GM12878 (cell line): ENCODE measurements at regions of chr12 and their contacts with region 1.

Region 1: DNA sequence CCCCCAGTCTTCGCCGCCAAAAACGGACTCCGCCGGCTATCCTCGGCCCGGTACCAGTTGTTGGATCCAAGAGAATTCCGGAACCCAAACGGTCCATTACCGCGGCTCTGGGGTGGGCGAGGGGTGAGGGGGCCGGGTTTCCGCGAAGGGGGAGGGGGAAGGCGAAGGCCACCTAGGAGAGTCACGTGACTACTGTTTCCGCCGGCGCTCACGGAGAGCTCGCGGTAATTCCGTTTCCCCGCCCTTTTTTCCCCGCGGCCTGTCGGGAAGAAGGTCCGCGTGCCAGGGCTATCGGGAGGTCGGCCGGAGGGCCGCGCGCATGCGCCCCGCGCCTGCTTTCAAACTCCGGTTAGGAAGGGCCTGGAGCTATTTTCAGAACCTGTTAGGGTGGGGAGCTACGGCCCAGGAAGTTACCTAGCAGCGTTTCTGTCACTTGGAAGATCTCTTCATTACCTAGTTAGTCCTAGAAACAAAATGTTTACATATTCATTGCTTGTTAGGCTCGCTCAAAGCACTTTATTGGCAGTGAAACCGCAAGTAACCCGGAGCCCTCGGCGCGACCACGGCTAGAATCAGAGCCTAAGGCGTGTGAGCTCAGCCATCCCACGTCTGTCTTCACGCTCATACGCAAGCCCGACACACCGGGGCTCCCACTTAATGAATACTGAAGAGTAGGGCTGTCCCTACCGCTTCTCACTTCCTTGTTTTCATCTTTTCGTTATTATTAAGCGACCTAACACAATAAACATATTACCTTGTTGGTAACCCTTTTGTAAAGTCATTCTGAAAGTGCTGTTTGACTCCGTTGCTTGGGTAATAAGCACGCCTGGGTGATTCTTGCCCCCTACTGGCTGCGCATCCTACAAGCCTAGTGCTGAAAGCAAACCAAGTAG is 624 bp upstream of the SBNO1 start:
- DNase-seq: peak; percentile 98
- ATAC-seq: peak; percentile 82
- H3K4me3 ChIP-seq: peak overlapping the region; percentile 61; the same call in 1 of the 2 replicates
- H3K27ac ChIP-seq: peak overlapping the region; percentile 99
- H3K4me1 ChIP-seq: peaks cover 10% of the 10 kb centered on the region
- H3K27me3 ChIP-seq: no peaks in the 10 kb centered on the region
- CTCF ChIP-seq: peak; percentile 76 to 89 (median 82)
- EP300 ChIP-seq: peak; percentile 99
- POLR2A ChIP-seq: peak; percentile 87
- RAD21 ChIP-seq: peak; percentile 66

Region 2: GRCh38 chr12:121663610-121663929 is 1701.7 kb before region 1 on chr12:
- CTCF ChIA-PET with region 1: no interaction called
- POLR2A ChIA-PET with region 1: no interaction called
- RAD21 ChIA-PET with region 1: no interaction called
- SMC1A ChIA-PET with region 1: no interaction called
- in situ Hi-C with region 1: no loop called
- intact Hi-C with region 1: loop called (anchors 5 kb)
- DNase-seq: no peak
- ATAC-seq: no peak
- H3K4me3 ChIP-seq: no peak overlapping the region
- H3K27ac ChIP-seq: peak overlapping the region; percentile 99
- H3K4me1 ChIP-seq: peaks cover 20% of the 10 kb centered on the region
- H3K27me3 ChIP-seq: no peaks in the 10 kb centered on the region
- CTCF ChIP-seq: no peak
- EP300 ChIP-seq: no peak
- POLR2A ChIP-seq: no peak
- RAD21 ChIP-seq: no peak

Region 3: GRCh38 chr12:123286652-123287373 is 78.5 kb before region 1 on chr12:
- CTCF ChIA-PET with region 1: no interaction called
- POLR2A ChIA-PET with region 1: no interaction called
- RAD21 ChIA-PET with region 1: no interaction called
- SMC1A ChIA-PET with region 1: no interaction called
- in situ Hi-C with region 1: no loop called
- intact Hi-C with region 1: no loop called
- DNase-seq: no peak
- ATAC-seq: no peak
- H3K4me3 ChIP-seq: no peak overlapping the region
- H3K27ac ChIP-seq: no peak overlapping the region
- H3K4me1 ChIP-seq: no peaks in the 10 kb centered on the region
- H3K27me3 ChIP-seq: no peaks in the 10 kb centered on the region
- CTCF ChIP-seq: no peak
- EP300 ChIP-seq: no peak
- POLR2A ChIP-seq: no peak
- RAD21 ChIP-seq: no peak

Region 4: GRCh38 chr12:123388177-123388947 is 23.1 kb after region 1 on chr12:
- CTCF ChIA-PET with region 1: interaction called, 13 read pairs
- POLR2A ChIA-PET with region 1: interaction called, 23 read pairs
- RAD21 ChIA-PET with region 1: interaction called, 38 read pairs
- SMC1A ChIA-PET with region 1: interaction called, 13 read pairs
- in situ Hi-C with region 1: no loop called
- intact Hi-C with region 1: loop called (anchors 1 kb)
- DNase-seq: peak; percentile 21
- ATAC-seq: peak; percentile 52
- H3K4me3 ChIP-seq: peak overlapping the region; percentile 98
- H3K27ac ChIP-seq: peak overlapping the region; percentile 66
- H3K4me1 ChIP-seq: peaks cover 20% of the 10 kb centered on the region
- H3K27me3 ChIP-seq: no peaks in the 10 kb centered on the region
- CTCF ChIP-seq: 0 out of 6 replicates have a peak, but pooled peaks of 1 of the 3 experiments have one; percentile 13
- EP300 ChIP-seq: 0 out of 4 replicates have a peak, but pooled peaks of 1 of the 2 experiments have one; percentile 10
- POLR2A ChIP-seq: no peak
- RAD21 ChIP-seq: no peak

Region 5: GRCh38 chr12:123398550-123399254 is 33.4 kb after region 1 on chr12:
- CTCF ChIA-PET with region 1: no interaction called
- POLR2A ChIA-PET with region 1: no interaction called
- RAD21 ChIA-PET with region 1: no interaction called
- SMC1A ChIA-PET with region 1: no interaction called
- in situ Hi-C with region 1: no loop called
- intact Hi-C with region 1: no loop called
- DNase-seq: no peak
- ATAC-seq: no peak; the same call in 2 of the 3 replicates
- H3K4me3 ChIP-seq: no peak overlapping the region
- H3K27ac ChIP-seq: no peak overlapping the region
- H3K4me1 ChIP-seq: no peaks in the 10 kb centered on the region
- H3K27me3 ChIP-seq: no peaks in the 10 kb centered on the region
- CTCF ChIP-seq: no peak
- EP300 ChIP-seq: no peak
- POLR2A ChIP-seq: no peak
- RAD21 ChIP-seq: no peak

Region 6: GRCh38 chr12:123436017-123436964 is 71.0 kb after region 1 on chr12 and contains the start of gene RILPL2:
- CTCF ChIA-PET with region 1: interaction called, 8 read pairs
- POLR2A ChIA-PET with region 1: interaction called, 17 read pairs
- RAD21 ChIA-PET with region 1: interaction called, 11 read pairs
- SMC1A ChIA-PET with region 1: interaction called, 15 read pairs
- in situ Hi-C with region 1: no loop called
- intact Hi-C with region 1: loop called (anchors 1 kb)
- DNase-seq: peak; percentile 86
- ATAC-seq: peak; percentile 84
- H3K4me3 ChIP-seq: peak within 1 kb of the TSS; percentile 82
- H3K27ac ChIP-seq: peak within 1 kb of the TSS; percentile 95
- H3K4me1 ChIP-seq: peaks cover 2% of the 10 kb centered on the region; the same call in 1 of the 2 replicates
- H3K27me3 ChIP-seq: no peaks in the 10 kb centered on the region
- CTCF ChIP-seq: no peak
- EP300 ChIP-seq: no peak; a peak in 1 of 4 replicates
- POLR2A ChIP-seq: peak; percentile 81
- RAD21 ChIP-seq: no peak; the same call in 1 of the 2 replicates
- polyA plus RNA-seq, gene RILPL2: 3.5 to 8.3 TPM

Region 7: DNA sequence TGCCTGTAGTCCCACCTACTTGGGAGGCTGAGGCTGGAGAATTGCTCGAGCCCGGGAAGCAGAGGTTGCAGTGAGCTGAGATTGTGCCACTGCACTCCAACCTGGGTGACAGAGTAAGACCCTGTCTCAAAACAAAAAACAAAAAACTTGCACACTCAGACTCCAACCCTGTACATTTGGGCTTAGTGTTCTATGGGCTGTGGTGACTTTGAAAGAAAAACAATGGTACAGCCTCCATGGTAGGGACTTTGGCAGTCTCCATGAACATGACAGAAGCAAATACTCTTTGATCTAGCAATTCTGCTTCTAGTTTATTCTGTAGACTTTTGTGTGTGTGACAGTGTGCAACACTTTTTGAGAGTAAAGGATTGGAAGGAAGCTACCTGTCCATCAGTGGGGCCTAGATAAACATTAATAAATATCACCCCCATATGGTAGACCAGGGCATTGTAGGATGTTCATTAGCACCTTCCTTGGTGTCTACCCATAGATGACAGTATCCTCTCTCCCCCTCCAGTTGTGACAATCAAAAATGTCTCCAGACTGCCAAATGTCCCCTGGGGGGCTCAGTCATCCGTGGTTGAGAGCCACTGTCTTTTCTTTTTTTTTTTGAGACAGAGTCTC is 103.4 kb after region 1 on chr12:
- CTCF ChIA-PET with region 1: interaction called, 3 read pairs
- POLR2A ChIA-PET with region 1: interaction called, 10 read pairs
- RAD21 ChIA-PET with region 1: interaction called, 4 read pairs
- SMC1A ChIA-PET with region 1: interaction called, 4 read pairs
- in situ Hi-C with region 1: no loop called
- intact Hi-C with region 1: no loop called
- DNase-seq: peak; percentile 48
- ATAC-seq: peak; percentile 99
- H3K4me3 ChIP-seq: no peak overlapping the region
- H3K27ac ChIP-seq: no peak overlapping the region
- H3K4me1 ChIP-seq: no peaks in the 10 kb centered on the region
- H3K27me3 ChIP-seq: no peaks in the 10 kb centered on the region
- CTCF ChIP-seq: peak; percentile 53 to 70 (median 70); a peak in 5 of 6 replicates
- EP300 ChIP-seq: no peak
- POLR2A ChIP-seq: no peak
- RAD21 ChIP-seq: peak; percentile 77